ENCODE measurements at regions of chr4 and their contacts with region 1.

Region 1: GRCh38 chr4:42656944-42657792 is at the start of gene ATP8A1:
- DNase-seq: peak; percentile 88 to 92 (median 91)
- H3K4me3 ChIP-seq: peak within 1 kb of the TSS; percentile 62 to 93
- H3K4me3 Mint-ChIP-seq: peak within 1 kb of the TSS; percentile 94 to 99 (median 97)
- H3K27ac ChIP-seq: peak within 1 kb of the TSS; percentile 81
- H3K27ac Mint-ChIP-seq: peak within 1 kb of the TSS; percentile 95 to 99 (median 98)
- H3K4me1 ChIP-seq: peaks cover 27% of the 10 kb centered on the region
- H3K4me1 Mint-ChIP-seq: peaks cover 29 to 52% (median 41%) of the 10 kb centered on the region in 4 donors
- H3K27me3 ChIP-seq: no peaks in the 10 kb centered on the region
- H3K27me3 Mint-ChIP-seq: no peaks in the 10 kb centered on the region
- total RNA-seq, gene ATP8A1: 25.8 to 33.5 TPM

Region 2: GRCh38 chr4:41990365-41991111 is 666.6 kb before region 1 on chr4 and contains the start of gene SLC30A9:
- CTCF ChIA-PET with region 1: no interaction called
- POLR2A ChIA-PET with region 1: no interaction called
- intact Hi-C with region 1: loop called (anchors 1 kb)
- DNase-seq: peak; percentile 93 to 97 (median 94)
- H3K4me3 ChIP-seq: peak within 1 kb of the TSS; percentile 67 to 87
- H3K4me3 Mint-ChIP-seq: peak within 1 kb of the TSS; percentile 90 to 99 (median 98)
- H3K27ac ChIP-seq: peak within 1 kb of the TSS; percentile 86
- H3K27ac Mint-ChIP-seq: peak within 1 kb of the TSS; percentile 96 to 100 (median 99)
- H3K4me1 ChIP-seq: peaks cover 32% of the 10 kb centered on the region
- H3K4me1 Mint-ChIP-seq: peaks cover 17 to 40% (median 29%) of the 10 kb centered on the region in 4 donors
- H3K27me3 ChIP-seq: no peaks in the 10 kb centered on the region
- H3K27me3 Mint-ChIP-seq: no peaks in the 10 kb centered on the region
- total RNA-seq, gene SLC30A9: 28.6 to 31.5 TPM

Region 3: DNA sequence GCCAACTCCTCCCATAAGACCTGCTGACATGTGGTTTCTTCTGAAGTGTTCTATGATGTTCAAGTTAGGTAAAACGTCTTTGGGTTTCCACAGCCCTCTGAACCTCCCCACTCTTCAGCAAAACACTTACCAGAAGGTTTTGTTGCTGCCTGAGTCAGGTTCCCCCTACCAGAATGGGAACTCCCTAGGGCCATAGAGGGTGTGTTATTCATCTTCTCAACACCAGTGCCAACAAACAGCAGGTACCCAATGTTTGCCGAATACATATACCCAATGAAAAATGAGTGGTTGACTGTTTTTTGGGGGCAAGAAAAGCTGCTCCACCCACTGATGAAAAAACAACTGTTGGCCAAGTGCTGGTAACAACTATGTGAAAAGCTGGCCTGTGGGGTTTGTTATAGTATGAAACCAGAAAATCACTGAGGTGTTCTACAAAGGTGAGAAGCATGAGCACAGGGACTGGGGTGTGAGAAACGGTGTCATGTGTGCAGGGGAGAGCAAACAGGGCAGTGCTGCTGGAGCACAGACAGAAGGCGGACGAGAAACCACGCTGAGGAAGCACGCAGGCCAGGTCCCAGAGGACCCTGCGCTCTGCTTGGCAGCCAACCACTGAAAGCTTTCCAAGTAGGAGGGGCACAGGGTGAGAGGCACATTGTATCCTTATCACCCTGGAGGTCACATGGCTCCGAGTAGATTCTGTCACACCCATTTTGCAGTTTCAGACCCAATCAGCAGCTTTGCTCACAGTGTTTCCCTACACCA is 29.1 kb before region 1 on chr4:
- CTCF ChIA-PET with region 1: interaction called, 3 read pairs
- POLR2A ChIA-PET with region 1: interaction called, 11 read pairs
- intact Hi-C with region 1: no loop called
- DNase-seq: peak in 4 of 5 donors; percentile 50 to 56 (median 52)
- H3K4me3 ChIP-seq: no peak overlapping the region
- H3K4me3 Mint-ChIP-seq: peak overlapping the region in 5 of 8 donors; percentile 7 to 77 (median 66)
- H3K27ac ChIP-seq: no peak overlapping the region
- H3K27ac Mint-ChIP-seq: peak overlapping the region in 6 of 7 donors; percentile 11 to 94 (median 68)
- H3K4me1 ChIP-seq: peaks cover 30% of the 10 kb centered on the region
- H3K4me1 Mint-ChIP-seq: peaks cover 31 to 65% (median 44%) of the 10 kb centered on the region in 4 donors
- H3K27me3 ChIP-seq: no peaks in the 10 kb centered on the region
- H3K27me3 Mint-ChIP-seq: no peaks in the 10 kb centered on the region

Region 4: DNA sequence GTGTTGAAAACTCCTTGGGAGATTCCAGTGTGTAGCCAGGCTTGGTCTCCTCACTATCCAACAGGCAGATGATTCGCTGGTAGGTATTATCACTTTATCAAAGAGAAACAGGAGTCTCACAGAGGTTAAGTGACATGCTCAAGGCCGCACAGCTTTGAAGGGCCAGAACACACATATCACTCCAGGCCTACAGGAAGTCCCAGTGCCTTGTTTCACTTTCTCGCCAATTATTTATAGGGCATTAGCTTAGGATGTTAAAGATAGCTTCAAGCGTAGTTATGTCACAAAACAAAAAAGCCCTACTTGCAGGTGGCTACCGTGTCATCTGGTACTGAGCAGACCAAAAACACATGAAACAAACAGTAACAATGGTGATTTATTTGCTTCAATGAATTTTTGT is 13.5 kb before region 1 on chr4:
- CTCF ChIA-PET with region 1: interaction called, 13 read pairs
- POLR2A ChIA-PET with region 1: interaction called, 28 read pairs
- intact Hi-C with region 1: no loop called
- DNase-seq: no peak
- H3K4me3 ChIP-seq: no peak overlapping the region
- H3K4me3 Mint-ChIP-seq: peak overlapping the region in 2 of 8 donors; percentile 1 to 56
- H3K27ac ChIP-seq: no peak overlapping the region
- H3K27ac Mint-ChIP-seq: no peak overlapping the region
- H3K4me1 ChIP-seq: peaks cover 52% of the 10 kb centered on the region
- H3K4me1 Mint-ChIP-seq: peaks cover 47 to 74% (median 60%) of the 10 kb centered on the region in 4 donors
- H3K27me3 ChIP-seq: no peaks in the 10 kb centered on the region
- H3K27me3 Mint-ChIP-seq: no peaks in the 10 kb centered on the region

Region 5: GRCh38 chr4:42678512-42678911 is 21.3 kb after region 1 on chr4:
- CTCF ChIA-PET with region 1: interaction called, 13 read pairs
- POLR2A ChIA-PET with region 1: interaction called, 81 read pairs
- intact Hi-C with region 1: no loop called
- DNase-seq: no peak
- H3K4me3 ChIP-seq: no peak overlapping the region
- H3K4me3 Mint-ChIP-seq: no peak overlapping the region
- H3K27ac ChIP-seq: no peak overlapping the region
- H3K27ac Mint-ChIP-seq: no peak overlapping the region
- H3K4me1 ChIP-seq: peaks cover 2% of the 10 kb centered on the region
- H3K4me1 Mint-ChIP-seq: peaks cover 0 to 15% (median 2%) of the 10 kb centered on the region in 4 donors
- H3K27me3 ChIP-seq: no peaks in the 10 kb centered on the region
- H3K27me3 Mint-ChIP-seq: no peaks in the 10 kb centered on the region

Measured in CD4-positive, alpha-beta memory T cell (primary cell).